ENCODE measurements at regions of chr5 and their contacts with region 1.

Region 1: DNA sequence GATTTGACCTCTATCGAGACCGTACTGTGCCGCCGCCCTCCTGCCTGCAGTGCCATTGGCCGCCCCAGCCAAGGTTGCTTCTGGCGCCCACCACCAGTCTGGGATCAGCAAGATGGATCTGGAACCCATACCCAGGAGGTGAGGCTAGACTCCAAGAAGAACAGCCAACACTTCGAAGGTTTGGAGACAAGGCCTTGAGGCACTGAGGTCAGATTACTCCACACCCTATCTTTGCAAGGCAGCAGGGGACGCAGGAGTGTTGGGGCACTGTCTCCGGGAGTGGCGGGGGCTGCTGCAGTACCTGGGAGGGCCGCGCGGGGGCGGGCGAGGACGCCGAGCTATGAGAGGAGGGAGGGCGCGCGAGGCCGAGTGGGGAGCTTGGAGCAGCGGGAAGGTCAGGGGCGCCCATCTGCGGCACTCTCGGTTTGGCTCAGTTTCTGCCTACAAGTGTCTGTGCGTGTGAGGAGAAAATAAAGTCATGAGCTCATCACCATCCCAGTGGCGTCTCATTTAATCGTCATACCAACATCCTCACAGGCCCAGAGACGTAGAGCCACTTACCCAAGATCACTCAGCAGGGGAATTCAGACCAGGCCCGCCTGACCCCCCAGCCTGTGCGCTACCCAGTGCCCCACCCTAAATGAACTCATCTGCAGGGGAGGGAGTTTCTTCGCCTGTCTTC is 20.5 kb upstream of the PSD2 start:
- DNase-seq: no peak
- H3K4me3 ChIP-seq: peak overlapping the region in 1 of 4 donors; percentile 22
- H3K27ac ChIP-seq: no peak overlapping the region
- H3K4me1 ChIP-seq: peaks cover 4 to 9% (median 8%) of the 10 kb centered on the region in 4 donors
- H3K27me3 ChIP-seq: no peaks in the 10 kb centered on the region
- CTCF ChIP-seq: peak; percentile 87 to 98 (median 88)
- EP300 ChIP-seq: no peak
- POLR2A ChIP-seq: no peak

Region 2: GRCh38 chr5:139439013-139439903 is 335.9 kb before region 1 on chr5 and contains the start of gene DNAJC18:
- intact Hi-C with region 1: loop called (anchors 10 kb)
- DNase-seq: peak; percentile 97
- H3K4me3 ChIP-seq: peak within 1 kb of the TSS; percentile 73 to 87 (median 80)
- H3K27ac ChIP-seq: peak within 1 kb of the TSS; percentile 91 to 97 (median 94)
- H3K4me1 ChIP-seq: peaks cover 7 to 24% (median 17%) of the 10 kb centered on the region in 4 donors
- H3K27me3 ChIP-seq: no peaks in the 10 kb centered on the region
- CTCF ChIP-seq: peak in 1 of 3 experiments; percentile 7
- EP300 ChIP-seq: no peak
- POLR2A ChIP-seq: no peak
- total RNA-seq, gene DNAJC18: 8.3 to 15.4 (median 13.4) TPM

Region 3: GRCh38 chr5:140174465-140175366 is 399.6 kb after region 1 on chr5 and contains the start of gene CYSTM1:
- intact Hi-C with region 1: no loop called
- DNase-seq: peak; percentile 98
- H3K4me3 ChIP-seq: peak within 1 kb of the TSS; percentile 74 to 98 (median 90)
- H3K27ac ChIP-seq: peak within 1 kb of the TSS; percentile 93 to 99 (median 98)
- H3K4me1 ChIP-seq: peaks cover 28 to 45% (median 44%) of the 10 kb centered on the region in 4 donors
- H3K27me3 ChIP-seq: no peaks in the 10 kb centered on the region
- CTCF ChIP-seq: peak in 1 of 3 experiments; percentile 26
- EP300 ChIP-seq: no peak
- POLR2A ChIP-seq: peak; percentile 84
- total RNA-seq, gene CYSTM1: 54.0 to 81.0 (median 67.8) TPM

Measured in esophagus muscularis mucosa (tissue), 4 donors.